ENCODE measurements at regions of chr16 and their contacts with region 1.

Region 1: DNA sequence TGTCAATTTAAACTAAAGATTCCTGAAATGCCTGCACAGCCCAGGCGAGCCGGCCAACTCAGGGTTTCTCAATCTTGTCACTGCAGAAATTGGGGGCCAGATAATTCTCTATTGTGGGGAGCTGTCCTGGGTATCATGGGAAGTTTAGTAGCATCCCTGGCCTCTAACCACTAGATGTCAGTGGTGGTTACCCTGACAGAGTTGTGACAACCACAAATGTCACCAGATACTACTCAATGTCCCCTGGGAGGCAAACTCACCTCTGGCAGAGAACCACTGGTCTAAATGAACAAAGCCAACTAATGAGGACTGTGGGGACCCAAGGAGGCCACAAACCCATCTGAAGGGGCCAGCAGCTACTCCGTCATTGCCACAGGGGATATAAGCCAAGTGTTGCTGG is 90.9 kb downstream of the MYH11 start:
- DNase-seq: peak; percentile 64
- H3K4me3 ChIP-seq: no peak overlapping the region; a peak in 1 of 4 replicates
- H3K27ac ChIP-seq: no peak overlapping the region
- H3K4me1 ChIP-seq: no peaks in the 10 kb centered on the region
- H3K27me3 ChIP-seq: peaks cover 4% of the 10 kb centered on the region; the same call in 1 of the 2 replicates
- CTCF ChIP-seq: peak; percentile 67
- EP300 ChIP-seq: no peak
- RAD21 ChIP-seq: peak; percentile 81

Region 2: GRCh38 chr16:15714393-15715172 is 51.3 kb before region 1 on chr16:
- CTCF ChIA-PET with region 1: no interaction called
- POLR2A ChIA-PET with region 1: no interaction called
- DNase-seq: no peak
- H3K4me3 ChIP-seq: no peak overlapping the region
- H3K27ac ChIP-seq: no peak overlapping the region
- H3K4me1 ChIP-seq: no peaks in the 10 kb centered on the region
- H3K27me3 ChIP-seq: no peaks in the 10 kb centered on the region
- CTCF ChIP-seq: no peak
- EP300 ChIP-seq: no peak
- RAD21 ChIP-seq: no peak

Region 3: GRCh38 chr16:15739950-15740349 is 25.9 kb before region 1 on chr16:
- CTCF ChIA-PET with region 1: no interaction called
- POLR2A ChIA-PET with region 1: no interaction called
- DNase-seq: no peak
- H3K4me3 ChIP-seq: no peak overlapping the region
- H3K27ac ChIP-seq: no peak overlapping the region
- H3K4me1 ChIP-seq: no peaks in the 10 kb centered on the region
- H3K27me3 ChIP-seq: no peaks in the 10 kb centered on the region
- CTCF ChIP-seq: no peak
- EP300 ChIP-seq: no peak
- RAD21 ChIP-seq: no peak

Region 4: GRCh38 chr16:15777533-15778203 is 11.8 kb after region 1 on chr16:
- CTCF ChIA-PET with region 1: interaction called, 14 read pairs
- POLR2A ChIA-PET with region 1: interaction called, 3 read pairs
- DNase-seq: peak; percentile 32
- H3K4me3 ChIP-seq: no peak overlapping the region
- H3K27ac ChIP-seq: no peak overlapping the region
- H3K4me1 ChIP-seq: no peaks in the 10 kb centered on the region
- H3K27me3 ChIP-seq: peaks cover 7% of the 10 kb centered on the region; the same call in 1 of the 2 replicates
- CTCF ChIP-seq: peak; percentile 40
- EP300 ChIP-seq: no peak
- RAD21 ChIP-seq: peak; percentile 62

Region 5: DNA sequence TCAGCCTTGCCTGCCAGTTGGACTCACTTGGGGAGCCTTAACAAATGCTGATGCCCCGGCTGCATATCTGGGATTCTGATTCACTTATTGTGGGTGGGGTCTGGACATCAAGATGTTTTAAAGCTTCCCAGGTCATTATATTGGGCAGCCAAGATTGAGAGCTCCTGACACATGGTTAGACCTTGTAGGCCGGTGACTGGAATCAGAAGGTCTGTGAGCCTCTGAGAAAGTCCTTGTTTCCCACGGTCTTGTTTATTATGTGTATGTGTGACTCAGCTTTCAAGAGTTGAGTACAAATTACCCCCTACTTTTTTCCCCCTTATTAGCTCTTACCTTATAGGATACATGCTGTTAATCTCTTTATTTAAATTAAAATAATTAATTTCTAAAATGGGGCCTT is 287.0 kb after region 1 on chr16:
- CTCF ChIA-PET with region 1: no interaction called
- POLR2A ChIA-PET with region 1: no interaction called
- DNase-seq: no peak
- H3K4me3 ChIP-seq: no peak overlapping the region
- H3K27ac ChIP-seq: no peak overlapping the region
- H3K4me1 ChIP-seq: no peaks in the 10 kb centered on the region
- H3K27me3 ChIP-seq: no peaks in the 10 kb centered on the region
- CTCF ChIP-seq: no peak
- EP300 ChIP-seq: no peak
- RAD21 ChIP-seq: no peak

Measured in SK-N-SH (cell line).